ENCODE measurements at regions of chr3 and their contacts with region 1.

Region 1: DNA sequence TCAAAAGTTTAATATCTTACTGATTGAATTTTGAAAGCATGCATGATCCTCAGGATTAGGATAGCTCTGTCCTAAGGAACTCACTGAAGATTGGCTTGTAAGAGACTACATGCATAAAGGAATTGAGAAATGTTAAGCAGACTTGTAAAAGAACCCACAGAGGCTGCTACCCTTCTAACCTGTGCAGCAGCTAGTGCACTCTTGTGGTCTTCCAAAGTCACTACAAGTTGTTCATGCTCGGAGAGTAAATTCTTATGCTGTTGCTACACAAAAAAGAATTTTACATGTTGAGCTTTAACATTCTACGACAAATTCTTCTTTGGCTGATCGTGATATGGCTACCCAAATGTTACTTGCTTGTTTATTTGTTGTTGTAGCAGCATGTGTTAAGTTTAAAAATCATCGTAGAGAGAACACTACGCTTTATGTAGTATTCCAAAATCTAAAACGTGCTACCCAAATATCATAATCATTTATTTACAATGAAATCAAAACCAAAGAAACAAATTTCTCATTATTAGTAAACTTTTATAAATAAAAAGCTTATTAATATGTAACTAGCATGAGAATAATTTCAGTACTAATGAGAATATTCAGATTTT is 55.0 kb downstream of the GOLIM4 start:
- DNase-seq: peak; percentile 13
- ATAC-seq: peak; percentile 80; the same call in 1 of the 2 replicates
- H3K4me3 ChIP-seq: no peak overlapping the region
- H3K27ac ChIP-seq: no peak overlapping the region
- H3K4me1 ChIP-seq: no peaks in the 10 kb centered on the region
- H3K27me3 ChIP-seq: no peaks in the 10 kb centered on the region
- CTCF ChIP-seq: peak; percentile 74

Region 2: DNA sequence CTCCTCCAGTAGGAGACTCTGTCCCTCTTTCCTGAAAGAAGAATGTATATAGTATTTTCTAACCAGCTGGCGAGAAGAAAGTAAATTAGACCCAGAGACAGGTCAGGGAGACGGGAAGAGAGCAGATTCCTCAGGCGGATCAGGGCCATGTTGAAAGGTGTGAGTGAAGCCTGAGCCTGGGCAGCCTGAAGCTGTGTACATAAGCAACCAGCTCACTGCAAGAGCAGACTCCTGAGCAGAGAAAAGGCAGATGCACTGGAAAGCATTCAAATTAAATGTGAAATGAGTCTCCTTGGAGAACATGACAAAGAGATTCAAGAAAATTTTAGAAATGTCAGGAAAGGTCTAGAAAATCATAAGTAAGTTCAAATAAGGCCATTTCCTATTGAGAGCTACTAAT is 110.7 kb before region 1 on chr3:
- CTCF ChIA-PET with region 1: no interaction called
- POLR2A ChIA-PET with region 1: no interaction called
- in situ Hi-C with region 1: no loop called
- intact Hi-C with region 1: loop called (anchors 5 kb)
- DNase-seq: no peak
- ATAC-seq: no peak
- H3K4me3 ChIP-seq: no peak overlapping the region
- H3K27ac ChIP-seq: no peak overlapping the region
- H3K4me1 ChIP-seq: no peaks in the 10 kb centered on the region
- H3K27me3 ChIP-seq: no peaks in the 10 kb centered on the region
- CTCF ChIP-seq: no peak

Region 3: GRCh38 chr3:168100777-168101492 is 60.2 kb after region 1 on chr3:
- CTCF ChIA-PET with region 1: no interaction called
- POLR2A ChIA-PET with region 1: no interaction called
- in situ Hi-C with region 1: no loop called
- intact Hi-C with region 1: no loop called
- DNase-seq: no peak
- ATAC-seq: no peak
- H3K4me3 ChIP-seq: no peak overlapping the region
- H3K27ac ChIP-seq: no peak overlapping the region
- H3K4me1 ChIP-seq: peaks cover 6% of the 10 kb centered on the region; the same call in 1 of the 2 replicates
- H3K27me3 ChIP-seq: peaks cover 2% of the 10 kb centered on the region; the same call in 1 of the 2 replicates
- CTCF ChIP-seq: no peak

Region 4: GRCh38 chr3:168322941-168323340 is 282.2 kb after region 1 on chr3:
- CTCF ChIA-PET with region 1: no interaction called
- POLR2A ChIA-PET with region 1: no interaction called
- in situ Hi-C with region 1: no loop called
- intact Hi-C with region 1: no loop called
- DNase-seq: no peak
- ATAC-seq: no peak
- H3K4me3 ChIP-seq: no peak overlapping the region
- H3K27ac ChIP-seq: no peak overlapping the region
- H3K4me1 ChIP-seq: no peaks in the 10 kb centered on the region
- H3K27me3 ChIP-seq: no peaks in the 10 kb centered on the region
- CTCF ChIP-seq: no peak